A549 (cell line): ENCODE measurements at regions of chr5 and their contacts with region 1.

Region 1: GRCh38 chr5:142769741-142770631 is at the start of gene ARHGAP26:
- DNase-seq: peak; percentile 93 to 95
- ATAC-seq: peak; percentile 91 to 98
- H3K4me3 ChIP-seq: peak within 1 kb of the TSS; percentile 74
- H3K27ac ChIP-seq: peak within 1 kb of the TSS; percentile 72 to 86
- H3K4me1 ChIP-seq: peaks cover 21% of the 10 kb centered on the region; the same call in 2 of the 3 replicates
- CTCF ChIP-seq: no peak; the same call in 1 of the 3 replicates
- EP300 ChIP-seq: no peak
- POLR2A ChIP-seq: peak; percentile 93
- RAD21 ChIP-seq: peak; percentile 52 to 66
- polyA plus RNA-seq, gene ARHGAP26: 19.1 and 29.8 TPM in 2 replicates

Region 2: GRCh38 chr5:142316051-142316450 is 453.9 kb before region 1 on chr5:
- CTCF ChIA-PET with region 1: no interaction called
- POLR2A ChIA-PET with region 1: no interaction called
- DNase-seq: no peak
- ATAC-seq: no peak
- H3K4me3 ChIP-seq: no peak overlapping the region
- H3K27ac ChIP-seq: no peak overlapping the region
- H3K4me1 ChIP-seq: peaks cover 17% of the 10 kb centered on the region
- CTCF ChIP-seq: no peak
- EP300 ChIP-seq: no peak
- POLR2A ChIP-seq: no peak
- RAD21 ChIP-seq: no peak

Region 3: DNA sequence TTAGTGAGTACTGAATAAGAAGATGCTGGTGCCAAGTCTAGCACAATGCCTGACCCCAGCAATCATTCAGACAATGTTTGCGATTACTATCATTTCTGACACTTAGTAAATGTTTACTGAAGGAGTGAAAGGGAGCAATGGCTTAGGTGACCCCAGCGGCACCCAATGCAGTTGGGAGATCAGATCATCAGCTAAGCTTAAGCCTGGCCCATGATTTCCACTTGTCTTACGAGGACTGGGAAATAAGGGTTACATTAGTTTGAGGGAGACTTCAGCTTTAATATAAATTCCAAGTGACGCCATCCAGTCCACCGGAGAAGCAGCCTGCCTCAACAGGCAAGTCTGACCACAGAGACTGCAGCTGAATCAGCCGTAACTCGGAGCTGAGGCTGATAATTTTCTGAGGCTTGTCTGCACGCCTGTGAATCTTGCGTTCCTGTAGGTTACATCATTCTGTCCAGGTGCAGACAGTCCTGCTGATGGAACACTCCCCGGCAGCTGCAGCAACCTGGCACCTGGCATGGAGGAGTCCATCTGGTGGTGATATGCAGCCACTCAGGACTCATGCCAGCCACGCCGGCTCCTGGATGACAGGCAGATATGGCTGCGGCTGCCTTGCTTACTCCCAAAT is 49.2 kb before region 1 on chr5:
- CTCF ChIA-PET with region 1: interaction called, 122 read pairs
- POLR2A ChIA-PET with region 1: no interaction called
- DNase-seq: peak in 1 of 2 experiments; percentile 59
- ATAC-seq: peak; percentile 43 to 60; a peak in 5 of 6 replicates
- H3K4me3 ChIP-seq: no peak overlapping the region
- H3K27ac ChIP-seq: peak overlapping the region; percentile 5 to 30; a peak in 2 of 6 replicates
- H3K4me1 ChIP-seq: peaks cover 23% of the 10 kb centered on the region
- CTCF ChIP-seq: no peak
- EP300 ChIP-seq: no peak
- POLR2A ChIP-seq: no peak
- RAD21 ChIP-seq: no peak

Region 4: GRCh38 chr5:142748568-142749249 is 21.3 kb before region 1 on chr5:
- CTCF ChIA-PET with region 1: interaction called, 17 read pairs
- POLR2A ChIA-PET with region 1: interaction called, 4 read pairs
- DNase-seq: peak in 1 of 2 experiments; percentile 44
- ATAC-seq: peak; percentile 60 to 82; a peak in 4 of 6 replicates
- H3K4me3 ChIP-seq: no peak overlapping the region
- H3K27ac ChIP-seq: no peak overlapping the region
- H3K4me1 ChIP-seq: peaks cover 10% of the 10 kb centered on the region; the same call in 2 of the 3 replicates
- CTCF ChIP-seq: peak; percentile 73
- EP300 ChIP-seq: no peak
- POLR2A ChIP-seq: no peak
- RAD21 ChIP-seq: peak; percentile 90 to 91

Region 5: DNA sequence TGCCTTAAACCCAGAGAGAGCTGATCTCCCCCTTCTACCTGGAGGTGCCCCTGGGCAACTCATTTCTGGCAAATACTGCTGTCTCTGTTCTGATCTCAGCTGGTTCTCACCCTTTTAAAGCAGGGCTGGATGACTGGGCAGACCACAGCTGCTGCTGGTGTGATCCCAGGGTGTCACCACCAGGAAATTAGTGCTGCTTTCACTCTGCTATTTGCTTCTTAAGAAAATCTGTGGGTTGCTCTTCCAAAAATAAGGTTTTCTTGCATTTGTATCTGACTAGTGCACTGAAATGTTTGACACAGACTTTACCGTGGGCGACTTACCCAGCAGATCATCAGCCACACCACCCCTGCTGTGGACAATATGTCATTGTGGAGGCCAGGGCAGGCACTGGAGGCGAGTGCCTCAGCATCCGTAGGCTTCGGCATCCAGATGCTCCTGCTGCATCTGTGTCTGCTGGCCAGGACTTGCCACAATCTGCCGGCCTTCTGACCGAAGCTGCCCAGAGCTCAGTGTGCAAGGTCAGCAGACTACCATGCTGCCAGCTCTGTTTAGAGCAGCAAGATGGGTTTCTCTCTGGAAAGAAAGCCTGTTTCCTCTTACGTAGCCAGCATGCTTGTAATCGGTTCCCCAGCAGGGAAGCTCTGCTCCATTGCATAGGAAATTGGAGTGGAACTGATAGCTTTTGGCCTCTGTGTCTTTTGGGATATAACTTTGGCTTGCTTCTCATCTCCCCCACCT is 13.8 kb after region 1 on chr5:
- CTCF ChIA-PET with region 1: interaction called, 48 read pairs
- POLR2A ChIA-PET with region 1: interaction called, 3 read pairs
- DNase-seq: no peak
- ATAC-seq: peak; percentile 36 to 41; a peak in 4 of 6 replicates
- H3K4me3 ChIP-seq: no peak overlapping the region
- H3K27ac ChIP-seq: peak overlapping the region in 1 of 2 experiments; percentile 22; a peak in 2 of 6 replicates
- H3K4me1 ChIP-seq: peaks cover 38% of the 10 kb centered on the region
- CTCF ChIP-seq: no peak
- EP300 ChIP-seq: no peak
- POLR2A ChIP-seq: no peak
- RAD21 ChIP-seq: no peak

Region 6: DNA sequence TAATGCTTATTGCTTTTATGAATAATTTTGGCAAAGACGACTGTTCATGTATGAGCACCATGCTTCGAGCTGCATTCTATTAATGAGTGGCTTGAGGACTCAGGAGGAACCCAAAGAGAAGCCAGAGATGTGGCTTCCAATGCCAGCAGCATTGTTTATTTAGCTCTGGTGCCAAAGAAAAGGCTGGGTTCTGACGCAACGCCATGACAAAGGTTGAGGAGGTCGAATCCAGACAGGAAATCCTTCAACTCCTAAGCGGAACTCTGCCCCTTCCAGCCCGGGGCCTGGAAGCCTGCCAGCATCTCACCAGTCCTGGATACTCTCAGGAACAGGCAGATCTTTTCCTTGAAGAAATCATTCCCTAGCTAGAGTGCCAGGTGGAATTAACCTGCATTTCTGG is 104.6 kb after region 1 on chr5:
- CTCF ChIA-PET with region 1: interaction called, 156 read pairs
- POLR2A ChIA-PET with region 1: interaction called, 11 read pairs
- DNase-seq: peak; percentile 73 to 92
- ATAC-seq: peak; percentile 66 to 85; a peak in 5 of 6 replicates
- H3K4me3 ChIP-seq: no peak overlapping the region
- H3K27ac ChIP-seq: peak overlapping the region; percentile 69 to 82
- H3K4me1 ChIP-seq: peaks cover 78% of the 10 kb centered on the region
- CTCF ChIP-seq: no peak
- EP300 ChIP-seq: peak; percentile 47; a peak in 2 of 5 replicates
- POLR2A ChIP-seq: no peak
- RAD21 ChIP-seq: no peak

Region 7: DNA sequence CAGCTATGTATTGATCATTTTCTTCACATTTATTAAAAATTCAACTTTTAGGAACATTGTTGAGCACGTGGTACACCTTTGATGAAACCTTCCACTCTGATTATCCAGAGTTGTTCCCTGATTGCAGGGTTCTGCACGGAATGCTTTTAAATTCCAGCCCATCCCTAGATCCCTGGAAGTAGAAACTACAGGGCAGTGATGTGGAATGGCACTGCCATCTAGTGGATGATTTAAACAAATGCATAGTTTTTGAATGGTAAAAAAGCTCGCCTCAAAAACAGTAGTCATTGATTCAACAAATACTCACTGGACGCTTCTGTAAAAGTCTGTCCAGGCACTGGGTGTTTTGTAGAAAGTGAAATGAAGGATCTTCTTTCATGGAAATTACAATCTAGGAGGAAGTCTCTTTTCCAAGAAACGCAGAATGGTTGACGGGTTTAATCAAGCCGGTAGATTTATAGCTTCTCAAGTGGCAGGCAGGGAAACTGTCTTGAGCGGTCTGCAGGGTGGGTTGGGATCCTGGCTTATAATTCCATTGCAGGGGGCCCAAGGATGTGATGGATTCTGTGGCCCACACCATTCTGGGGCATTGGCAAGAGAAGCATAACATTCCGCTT is 118.6 kb after region 1 on chr5:
- CTCF ChIA-PET with region 1: interaction called, 54 read pairs
- POLR2A ChIA-PET with region 1: no interaction called
- DNase-seq: peak; percentile 60 to 72
- ATAC-seq: peak; percentile 81 to 92
- H3K4me3 ChIP-seq: no peak overlapping the region
- H3K27ac ChIP-seq: no peak overlapping the region
- H3K4me1 ChIP-seq: 0 out of 3 replicates have a peak, but pooled peaks cover 3% of the 10 kb centered on the region
- CTCF ChIP-seq: peak; percentile 91
- EP300 ChIP-seq: no peak
- POLR2A ChIP-seq: no peak
- RAD21 ChIP-seq: peak; percentile 90 to 93